Naive thymus-derived CD4-positive, alpha-beta T cell (primary cell): ENCODE measurements at regions of chr16 and their contacts with region 1.

Region 1: GRCh38 chr16:75305364-75306098 is 54.1 kb upstream of the BCAR1 start:
- DNase-seq: peak in 6 of 9 donors; percentile 12 to 50 (median 20)
- ATAC-seq: peak; percentile 58
- H3K4me3 ChIP-seq: no peak overlapping the region
- H3K4me3 Mint-ChIP-seq: peak overlapping the region in 6 of 10 donors; percentile 7 to 39 (median 16)
- H3K27ac ChIP-seq: no peak overlapping the region
- H3K27ac Mint-ChIP-seq: peak overlapping the region in 6 of 9 donors; percentile 6 to 68 (median 56)
- H3K4me1 ChIP-seq: peaks cover 0 to 13% of the 10 kb centered on the region in 2 donors
- H3K4me1 Mint-ChIP-seq: peaks cover 20 to 47% (median 38%) of the 10 kb centered on the region in 7 donors
- H3K27me3 ChIP-seq: no peaks in the 10 kb centered on the region
- H3K27me3 Mint-ChIP-seq: peaks cover 0 to 3% (median 0%) of the 10 kb centered on the region in 5 donors

Region 2: GRCh38 chr16:75265845-75266701 is 39.5 kb before region 1 on chr16:
- CTCF ChIA-PET with region 1: no interaction called
- POLR2A ChIA-PET with region 1: no interaction called
- intact Hi-C with region 1: no loop called
- DNase-seq: no peak
- ATAC-seq: no peak
- H3K4me3 ChIP-seq: no peak overlapping the region
- H3K4me3 Mint-ChIP-seq: peak overlapping the region; percentile 46 to 89 (median 77)
- H3K27ac ChIP-seq: no peak overlapping the region
- H3K27ac Mint-ChIP-seq: peak overlapping the region in 1 of 9 donors; percentile 38
- H3K4me1 ChIP-seq: no peaks in the 10 kb centered on the region
- H3K4me1 Mint-ChIP-seq: peaks cover 0 to 13% (median 13%) of the 10 kb centered on the region in 7 donors
- H3K27me3 ChIP-seq: no peaks in the 10 kb centered on the region
- H3K27me3 Mint-ChIP-seq: peaks cover 30 to 50% (median 50%) of the 10 kb centered on the region in 5 donors

Region 3: GRCh38 chr16:75288596-75289120 is 16.9 kb before region 1 on chr16:
- CTCF ChIA-PET with region 1: no interaction called
- POLR2A ChIA-PET with region 1: interaction called, 4 read pairs
- intact Hi-C with region 1: loop called in 1 of 2 experiments (anchors 1 kb)
- DNase-seq: peak; percentile 21 to 78 (median 72)
- ATAC-seq: peak; percentile 93
- H3K4me3 ChIP-seq: no peak overlapping the region
- H3K4me3 Mint-ChIP-seq: peak overlapping the region; percentile 33 to 82 (median 60)
- H3K27ac ChIP-seq: no peak overlapping the region
- H3K27ac Mint-ChIP-seq: peak overlapping the region; percentile 29 to 86 (median 67)
- H3K4me1 ChIP-seq: peaks cover 11 to 18% of the 10 kb centered on the region in 2 donors
- H3K4me1 Mint-ChIP-seq: peaks cover 16 to 22% (median 19%) of the 10 kb centered on the region in 7 donors
- H3K27me3 ChIP-seq: no peaks in the 10 kb centered on the region
- H3K27me3 Mint-ChIP-seq: peaks cover 7 to 26% (median 15%) of the 10 kb centered on the region in 5 donors

Region 4: DNA sequence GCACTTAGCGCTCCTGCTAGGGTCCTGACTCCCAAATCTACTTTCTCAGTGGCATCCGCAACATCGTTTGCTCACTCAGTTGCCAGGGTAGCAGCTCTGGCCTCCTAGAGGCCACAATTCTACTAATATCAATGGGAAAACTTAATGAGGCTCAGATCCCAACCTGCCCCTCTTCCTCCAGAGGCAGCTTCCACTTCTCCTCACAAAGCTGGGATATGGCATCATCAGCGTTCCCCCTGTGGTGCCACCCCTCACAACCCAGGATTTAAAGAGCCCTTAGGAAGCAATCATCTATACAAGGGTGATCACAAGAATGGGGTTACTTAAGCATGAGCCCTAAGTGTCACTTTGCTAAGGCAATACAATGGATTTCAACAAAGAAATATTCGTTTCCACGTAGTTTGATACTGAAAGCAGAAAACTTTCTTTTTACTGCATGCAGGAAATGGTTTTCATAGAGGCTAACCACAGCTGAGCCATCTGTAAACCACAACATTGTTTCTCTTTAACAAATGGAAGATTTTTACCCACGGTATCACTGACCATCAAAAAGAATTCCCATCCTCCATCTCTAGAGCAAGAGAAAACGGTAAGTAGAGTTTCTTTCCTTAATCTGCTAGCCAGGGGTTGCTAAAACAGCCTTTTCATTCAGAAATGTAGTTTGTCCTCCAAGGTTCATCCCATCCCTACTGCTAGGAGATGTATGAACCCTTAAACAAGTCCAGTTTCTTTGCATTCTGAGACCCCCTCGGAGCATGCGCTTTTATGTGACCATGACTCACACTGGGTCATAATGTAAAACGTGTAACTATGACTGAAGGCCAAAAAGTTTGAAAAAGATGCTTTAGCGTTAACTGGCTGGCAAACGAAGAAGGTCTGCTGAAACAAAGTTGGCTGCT is 14.2 kb after region 1 on chr16:
- CTCF ChIA-PET with region 1: no interaction called
- POLR2A ChIA-PET with region 1: no interaction called
- intact Hi-C with region 1: loop called in 1 of 2 experiments (anchors 1 kb)
- DNase-seq: peak in 6 of 9 donors; percentile 8 to 48 (median 28)
- ATAC-seq: peak; percentile 42
- H3K4me3 ChIP-seq: peak overlapping the region; percentile 52
- H3K4me3 Mint-ChIP-seq: peak overlapping the region; percentile 51 to 81 (median 75)
- H3K27ac ChIP-seq: no peak overlapping the region
- H3K27ac Mint-ChIP-seq: peak overlapping the region in 4 of 9 donors; percentile 38 to 64 (median 56)
- H3K4me1 ChIP-seq: peaks cover 18 to 19% of the 10 kb centered on the region in 2 donors
- H3K4me1 Mint-ChIP-seq: peaks cover 21 to 41% (median 32%) of the 10 kb centered on the region in 7 donors
- H3K27me3 ChIP-seq: no peaks in the 10 kb centered on the region
- H3K27me3 Mint-ChIP-seq: peaks cover 0 to 31% (median 10%) of the 10 kb centered on the region in 5 donors